Heart right ventricle (tissue), 16 donors: ENCODE measurements at regions of chr4 and their contacts with region 1.

Region 1: GRCh38 chr4:156594624-156595023 is 377.0 kb downstream of the PDGFC start:
- DNase-seq: peak; percentile 8 to 35
- ATAC-seq: peak in 2 of 8 donors; percentile 39 to 55
- H3K4me3 ChIP-seq: no peak overlapping the region
- H3K27ac ChIP-seq: no peak overlapping the region
- H3K4me1 ChIP-seq: peaks cover 0 to 25% (median 0%) of the 10 kb centered on the region in 9 donors
- H3K27me3 ChIP-seq: peaks cover 0 to 5% (median 0%) of the 10 kb centered on the region in 7 donors
- CTCF ChIP-seq: no peak

Region 2: DNA sequence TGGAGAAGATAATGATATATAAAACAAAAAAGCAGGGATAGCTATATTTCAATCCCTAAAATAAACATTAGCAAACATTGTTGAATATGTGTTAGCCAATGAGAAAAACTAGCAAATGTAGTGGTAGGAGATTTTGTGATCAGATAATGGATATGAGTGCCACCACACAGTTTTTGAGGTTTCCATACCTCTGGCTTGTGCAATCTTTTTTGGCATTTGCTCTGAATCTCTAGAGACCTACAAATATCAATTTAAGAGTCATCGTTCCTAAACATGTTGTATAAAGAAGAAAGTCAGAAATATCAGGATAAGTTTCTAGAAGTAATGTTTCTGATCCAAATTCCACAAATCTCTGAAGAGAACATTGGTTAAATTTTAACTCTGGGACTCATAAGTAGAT is 68.3 kb after region 1 on chr4:
- intact Hi-C with region 1: no loop called
- DNase-seq: no peak
- ATAC-seq: no peak
- H3K4me3 ChIP-seq: no peak overlapping the region
- H3K27ac ChIP-seq: no peak overlapping the region
- H3K4me1 ChIP-seq: no peaks in the 10 kb centered on the region
- H3K27me3 ChIP-seq: no peaks in the 10 kb centered on the region
- CTCF ChIP-seq: no peak

Region 3: GRCh38 chr4:156968479-156968984 is 373.9 kb after region 1 on chr4:
- intact Hi-C with region 1: loop called in 1 of 10 experiments (anchors 10 kb)
- DNase-seq: peak; percentile 15 to 57
- ATAC-seq: peak in 5 of 8 donors; percentile 25 to 43 (median 38)
- H3K4me3 ChIP-seq: peak overlapping the region in 5 of 10 donors; percentile 74 to 86 (median 80)
- H3K27ac ChIP-seq: peak overlapping the region in 5 of 10 donors; percentile 6 to 87 (median 18)
- H3K4me1 ChIP-seq: peaks cover 0 to 53% (median 30%) of the 10 kb centered on the region in 9 donors
- H3K27me3 ChIP-seq: peaks cover 0 to 7% (median 0%) of the 10 kb centered on the region in 7 donors
- CTCF ChIP-seq: peak; percentile 60 to 82 (median 79)